Endothelial cell of umbilical vein (primary cell): ENCODE measurements at regions of chr6 and their contacts with region 1.

Region 1: DNA sequence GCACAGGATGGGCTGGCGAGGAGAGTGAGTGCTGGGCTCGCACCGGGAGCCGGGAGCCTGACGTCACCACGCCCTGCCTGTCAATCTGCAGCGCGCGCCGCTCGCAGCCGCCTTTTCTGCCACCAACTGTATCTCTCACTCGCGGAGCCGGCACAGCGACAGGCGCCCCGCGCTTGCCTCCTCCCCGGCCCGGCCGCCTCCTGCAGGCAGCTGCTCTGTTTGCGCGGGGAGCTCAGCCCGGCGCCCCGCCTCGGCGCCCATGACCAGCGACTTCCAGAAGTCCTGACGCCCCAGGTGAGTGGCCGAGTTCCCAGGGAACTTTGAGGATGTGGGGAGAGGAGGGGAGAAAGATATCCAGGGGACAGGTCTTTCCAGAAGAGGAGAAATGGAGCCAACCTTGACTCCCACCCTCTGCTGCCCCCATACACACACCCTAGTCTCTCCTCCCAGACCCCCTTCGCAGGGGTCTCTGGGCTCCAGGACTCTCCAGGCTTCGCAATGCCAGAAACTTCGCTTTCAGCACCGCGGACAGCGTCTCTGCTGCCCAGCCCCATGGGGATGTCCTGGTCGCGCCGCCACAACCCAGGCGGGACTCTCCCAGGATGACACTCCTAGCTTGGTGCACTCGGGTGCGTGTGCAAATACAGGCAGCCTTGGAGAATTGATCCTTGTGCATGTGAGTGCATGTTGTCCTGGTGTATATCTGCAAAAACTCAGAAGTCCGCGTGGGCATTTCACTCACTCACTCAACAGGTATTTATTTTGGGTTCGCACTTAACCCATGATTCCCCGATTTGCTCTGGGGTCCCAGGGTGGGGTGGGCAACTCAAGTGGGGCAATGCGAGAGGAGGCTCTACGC is at the start of gene GPR6:
- DNase-seq: peak; percentile 50
- H3K4me3 ChIP-seq: no peak within 1 kb of the TSS
- H3K27ac ChIP-seq: no peak within 1 kb of the TSS
- H3K4me1 ChIP-seq: no peaks in the 10 kb centered on the region
- H3K27me3 ChIP-seq: peaks cover 8 to 15% of the 10 kb centered on the region in 2 experiments
- CTCF ChIP-seq: no peak
- POLR2A ChIP-seq: no peak
- total RNA-seq, gene GPR6: not detected in 2 replicates

Region 2: DNA sequence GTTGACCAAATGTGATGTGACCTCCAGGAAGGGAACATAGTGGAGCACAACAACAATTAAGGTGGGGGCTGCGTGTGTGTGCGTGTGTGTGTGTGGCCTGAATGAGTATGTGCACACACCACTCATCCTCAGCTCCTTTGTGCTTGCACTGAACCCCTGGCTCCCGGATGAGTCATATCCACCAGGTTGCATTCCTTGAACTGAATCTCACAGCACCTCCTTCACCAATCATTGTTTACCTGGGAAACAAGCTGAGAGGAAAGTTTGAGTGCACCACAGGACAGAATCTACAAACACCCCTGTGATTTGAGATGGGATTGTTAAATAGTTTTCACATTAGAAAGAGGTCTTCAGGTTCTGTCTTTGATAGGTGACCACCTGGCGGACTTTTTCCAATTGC is 34.0 kb before region 1 on chr6:
- CTCF ChIA-PET with region 1: no interaction called
- POLR2A ChIA-PET with region 1: no interaction called
- dilution Hi-C with region 1: no loop called
- intact Hi-C with region 1: no loop called
- DNase-seq: no peak
- H3K4me3 ChIP-seq: no peak overlapping the region
- H3K27ac ChIP-seq: no peak overlapping the region
- H3K4me1 ChIP-seq: no peaks in the 10 kb centered on the region
- H3K27me3 ChIP-seq: peaks cover 2 to 5% of the 10 kb centered on the region in 2 experiments
- CTCF ChIP-seq: no peak
- POLR2A ChIP-seq: no peak

Region 3: DNA sequence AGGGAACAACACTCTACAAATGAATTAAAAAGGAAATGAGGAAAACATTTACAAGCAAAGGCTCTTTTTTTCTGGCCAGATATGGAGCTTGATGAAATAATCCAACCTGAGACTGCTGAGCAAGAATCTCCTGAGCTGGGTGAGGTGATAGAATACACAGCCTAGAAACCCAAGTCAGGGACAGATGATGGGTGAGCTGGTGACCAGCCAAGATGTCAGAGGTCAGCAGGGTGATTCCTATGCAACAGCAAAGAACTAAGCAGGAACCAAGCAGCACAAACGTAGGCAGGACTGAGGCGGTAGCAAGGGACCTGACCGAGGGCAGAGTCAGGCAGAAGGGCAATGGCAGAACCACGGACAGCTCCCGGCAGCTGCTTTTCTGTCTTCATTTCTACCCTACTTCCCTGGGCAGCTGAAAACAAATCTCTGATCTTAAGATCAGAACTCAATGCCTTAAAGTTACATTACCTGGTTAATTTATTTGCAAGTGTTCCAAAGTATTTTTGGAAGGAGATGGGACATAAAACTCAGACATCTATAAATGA is 276.9 kb after region 1 on chr6:
- CTCF ChIA-PET with region 1: no interaction called
- POLR2A ChIA-PET with region 1: no interaction called
- dilution Hi-C with region 1: no loop called
- intact Hi-C with region 1: loop called (anchors 1 kb)
- DNase-seq: peak; percentile 36
- H3K4me3 ChIP-seq: no peak overlapping the region
- H3K27ac ChIP-seq: no peak overlapping the region
- H3K4me1 ChIP-seq: no peaks in the 10 kb centered on the region
- H3K27me3 ChIP-seq: no peaks in the 10 kb centered on the region
- CTCF ChIP-seq: no peak
- POLR2A ChIP-seq: no peak